GM13977 (cell line): ENCODE measurements at regions of chr22 and their contacts with region 1.

Region 1: GRCh38 chr22:50276143-50276542 is 6.0 kb upstream of the MAPK11 start:
- DNase-seq: peak; percentile 79
- CTCF ChIP-seq: peak; percentile 73

Region 2: DNA sequence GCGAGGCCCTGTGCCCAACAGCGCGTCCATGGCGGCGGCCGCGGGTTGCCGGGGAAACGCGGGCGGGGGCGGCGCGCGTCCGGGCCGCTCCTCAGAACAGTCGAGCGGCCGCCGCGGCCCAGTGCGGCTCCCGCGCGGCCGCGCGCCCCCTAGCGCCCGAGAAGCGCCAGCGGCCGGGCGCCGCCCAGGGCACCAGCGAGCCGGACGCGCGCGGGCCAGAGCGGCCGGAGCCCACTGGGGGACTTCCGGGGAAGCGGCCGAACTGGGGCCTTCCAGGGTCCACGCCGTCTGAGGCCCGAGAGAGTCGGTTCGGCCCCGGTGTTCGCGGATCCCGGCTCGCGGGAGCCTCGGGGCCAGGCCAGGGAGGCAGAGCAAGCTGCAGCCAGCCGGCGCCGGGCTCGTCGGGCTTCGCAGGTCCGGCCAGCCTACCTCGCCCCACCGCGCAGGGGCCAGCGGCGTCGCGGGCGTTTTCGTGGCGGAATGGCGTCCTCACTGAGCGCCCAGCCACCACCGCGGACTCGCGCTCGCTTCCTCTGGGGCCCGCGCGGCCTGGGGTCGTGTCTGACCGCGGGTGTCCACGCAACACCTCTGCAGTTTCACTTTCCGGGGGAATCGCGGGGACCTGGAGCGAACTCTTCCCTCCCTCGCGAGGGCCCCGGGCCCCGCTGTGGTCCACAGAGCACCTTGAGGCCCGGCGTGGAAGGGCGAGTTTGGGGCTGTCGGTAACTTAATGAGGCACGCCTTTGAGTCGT is 51.0 kb after region 1 on chr22 and contains the start of gene DENND6B:
- in situ Hi-C with region 1: loop called (anchors 10 kb)
- DNase-seq: peak; percentile 97
- CTCF ChIP-seq: peak; percentile 90

Region 3: DNA sequence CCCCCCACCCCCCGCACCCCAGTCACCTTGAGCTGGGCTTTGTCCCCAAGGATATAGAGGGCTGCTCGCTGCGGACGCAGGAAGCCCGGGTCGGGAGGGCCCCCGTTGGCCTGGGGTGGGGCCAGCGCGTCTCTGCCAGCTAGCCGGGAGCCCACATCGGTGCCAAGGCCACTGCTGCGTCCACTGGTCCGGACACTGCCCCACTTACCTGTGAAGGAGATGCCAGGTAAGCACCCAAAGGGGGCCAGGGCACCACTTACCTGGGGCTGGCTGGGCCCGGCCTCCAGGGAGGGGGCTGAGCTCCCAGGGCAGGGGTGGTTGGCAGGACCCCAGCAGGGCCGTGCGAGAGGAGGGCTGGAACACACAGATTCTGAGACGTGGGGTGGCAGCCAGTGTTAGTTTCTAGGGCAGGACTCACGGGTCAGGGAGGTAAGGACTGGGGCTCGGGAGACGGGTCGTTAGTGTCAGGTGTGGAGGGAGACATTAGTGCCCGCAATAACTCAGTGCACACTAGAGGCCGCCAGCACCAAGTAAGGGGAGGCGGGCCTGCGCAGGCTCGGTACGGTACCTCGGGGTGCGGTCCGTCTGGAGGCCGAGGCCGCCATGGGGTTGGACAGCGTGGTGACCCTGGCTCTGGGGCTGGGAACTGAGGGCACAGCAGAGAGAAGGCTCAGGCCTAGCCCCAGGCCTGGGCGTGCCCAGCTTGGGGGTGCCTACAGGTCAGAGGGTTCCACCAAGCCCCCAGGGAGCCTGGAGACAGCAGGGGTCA is 180.5 kb after region 1 on chr22:
- in situ Hi-C with region 1: no loop called
- DNase-seq: peak; percentile 72
- CTCF ChIP-seq: peak; percentile 43